PC-9 (cell line): ENCODE measurements at regions of chr6 and their contacts with region 1.

Region 1: GRCh38 chr6:105786890-105787655 is 299.1 kb upstream of the PRDM1 start:
- DNase-seq: no peak
- H3K4me3 ChIP-seq: no peak overlapping the region
- H3K27ac ChIP-seq: no peak overlapping the region
- H3K4me1 ChIP-seq: no peaks in the 10 kb centered on the region; the same call in 1 of the 2 replicates
- H3K27me3 ChIP-seq: no peaks in the 10 kb centered on the region
- CTCF ChIP-seq: no peak

Region 2: DNA sequence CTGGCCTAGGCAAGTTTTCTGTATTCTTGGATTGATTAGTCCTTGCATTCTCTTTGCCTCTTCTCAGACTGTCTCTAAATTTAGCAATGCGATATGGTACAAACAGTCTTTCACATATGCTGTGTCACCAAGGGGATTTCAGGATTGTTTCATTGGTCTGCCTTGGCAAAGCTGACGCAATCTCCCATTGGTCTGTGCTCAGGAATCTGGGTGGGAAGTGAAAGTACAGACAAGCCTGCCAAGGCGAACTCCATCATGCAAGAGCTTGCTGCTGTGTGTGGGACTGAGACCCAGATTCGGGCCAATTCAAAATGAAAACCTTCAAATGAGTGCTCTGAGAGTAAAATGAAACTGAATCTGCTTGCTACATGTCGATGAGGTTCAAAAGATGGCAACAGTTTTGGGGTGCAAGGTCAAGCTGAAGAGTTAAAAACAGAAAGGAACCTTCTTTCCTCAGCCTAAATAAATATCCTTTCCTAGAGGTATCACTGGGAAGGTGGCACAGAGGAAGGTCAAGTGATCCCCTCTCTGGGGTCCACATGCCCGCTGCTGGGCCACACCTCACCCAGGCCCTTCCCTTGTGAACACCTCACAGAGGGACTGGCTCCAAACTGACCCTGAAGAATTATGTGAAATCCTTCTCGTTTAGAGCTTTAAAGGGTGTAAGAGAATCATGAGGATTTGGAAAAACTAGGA is 185.4 kb before region 1 on chr6:
- CTCF ChIA-PET with region 1: no interaction called
- POLR2A ChIA-PET with region 1: no interaction called
- intact Hi-C with region 1: loop called (anchors 10 kb)
- DNase-seq: peak; percentile 58 to 70
- H3K4me3 ChIP-seq: no peak overlapping the region
- H3K27ac ChIP-seq: peak overlapping the region; percentile 28
- H3K4me1 ChIP-seq: peaks cover 46% of the 10 kb centered on the region
- H3K27me3 ChIP-seq: no peaks in the 10 kb centered on the region
- CTCF ChIP-seq: no peak